ENCODE measurements at regions of chr15 and their contacts with region 1.

Region 1: GRCh38 chr15:50786871-50787270 is 21.4 kb upstream of the SPPL2A start:
- DNase-seq: no peak
- H3K4me3 ChIP-seq: no peak overlapping the region
- H3K27ac ChIP-seq: peak overlapping the region; percentile 27 to 74 (median 61)
- H3K4me1 ChIP-seq: peaks cover 0 to 62% (median 24%) of the 10 kb centered on the region in 4 donors
- H3K27me3 ChIP-seq: no peaks in the 10 kb centered on the region
- CTCF ChIP-seq: no peak
- EP300 ChIP-seq: no peak
- POLR2A ChIP-seq: no peak

Region 2: DNA sequence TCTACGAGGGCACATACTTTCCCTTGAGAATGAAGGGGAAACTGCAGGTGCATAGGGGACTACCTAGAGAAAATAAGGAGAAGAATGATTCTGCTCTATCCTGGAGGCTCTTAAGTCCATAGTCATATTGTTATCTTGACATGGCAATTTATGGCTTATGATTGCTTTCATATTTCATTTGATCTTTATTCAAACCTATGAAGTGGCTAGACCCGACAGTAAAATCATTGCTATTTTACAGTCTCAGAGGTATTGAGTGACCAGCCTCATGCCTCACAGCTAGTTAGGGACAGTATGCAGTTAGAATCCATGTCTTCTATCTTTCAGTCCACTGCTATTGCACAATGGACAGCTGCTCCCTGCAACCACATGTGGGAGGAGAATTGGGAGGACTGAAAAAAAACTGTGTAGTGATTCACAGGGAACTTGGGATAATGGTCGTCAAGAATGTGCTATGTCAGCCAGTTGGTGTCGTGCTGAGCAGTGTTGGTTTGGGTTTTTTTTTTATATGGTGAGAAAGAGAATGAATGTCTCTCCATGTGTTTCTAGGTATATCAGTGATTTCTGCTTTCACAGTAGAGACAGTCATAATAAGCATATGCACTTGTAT is 41.8 kb after region 1 on chr15:
- in situ Hi-C with region 1: no loop called
- intact Hi-C with region 1: loop called (anchors 1 kb)
- DNase-seq: peak; percentile 18
- H3K4me3 ChIP-seq: no peak overlapping the region
- H3K27ac ChIP-seq: no peak overlapping the region
- H3K4me1 ChIP-seq: peaks cover 0 to 11% (median 3%) of the 10 kb centered on the region in 4 donors
- H3K27me3 ChIP-seq: no peaks in the 10 kb centered on the region
- CTCF ChIP-seq: no peak
- EP300 ChIP-seq: no peak
- POLR2A ChIP-seq: no peak